Heart left ventricle (tissue), 16 donors: ENCODE measurements at regions of chr15 and their contacts with region 1.

Region 1: DNA sequence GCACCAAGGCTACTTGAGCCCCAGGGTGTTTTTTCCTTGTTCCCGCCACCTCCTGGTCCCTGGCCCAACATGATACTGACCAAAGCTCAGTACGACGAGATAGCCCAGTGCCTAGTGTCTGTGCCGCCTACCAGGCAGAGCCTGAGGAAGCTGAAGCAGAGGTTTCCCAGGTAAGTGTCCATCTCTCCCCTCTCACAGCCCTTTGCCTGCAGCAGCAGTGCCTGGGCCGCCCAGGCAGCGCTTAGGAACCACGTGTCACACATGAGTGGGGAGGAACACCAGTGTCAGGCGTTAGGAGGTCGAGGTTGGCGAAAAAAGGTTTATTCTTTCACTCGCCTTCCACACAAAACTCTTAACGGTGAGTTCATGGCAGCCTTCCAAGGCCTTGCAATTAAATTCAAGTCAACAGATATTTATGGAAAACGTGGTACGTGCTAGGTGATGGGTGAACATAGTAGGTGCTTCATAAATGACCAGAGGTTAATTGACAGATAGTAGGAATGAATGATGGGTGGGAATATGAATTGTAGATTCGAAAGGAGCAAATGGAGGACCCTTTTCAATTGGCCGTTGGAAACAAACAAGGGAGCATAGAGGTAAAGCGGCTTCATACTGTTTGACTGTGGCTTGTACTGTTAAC is 486 bp downstream of the CDIN1 start:
- DNase-seq: peak in 4 of 5 donors; percentile 31 to 66 (median 44)
- ATAC-seq: peak in 3 of 4 donors; percentile 23 to 54 (median 36)
- H3K4me3 ChIP-seq: peak overlapping the region; percentile 15 to 83 (median 74)
- H3K27ac ChIP-seq: peak overlapping the region; percentile 18 to 91 (median 88)
- H3K4me1 ChIP-seq: peaks cover 0 to 41% (median 12%) of the 10 kb centered on the region in 12 donors
- H3K27me3 ChIP-seq: no peaks in the 10 kb centered on the region
- CTCF ChIP-seq: peak in 1 of 12 donors; percentile 0
- POLR2A ChIP-seq: no peak

Region 2: DNA sequence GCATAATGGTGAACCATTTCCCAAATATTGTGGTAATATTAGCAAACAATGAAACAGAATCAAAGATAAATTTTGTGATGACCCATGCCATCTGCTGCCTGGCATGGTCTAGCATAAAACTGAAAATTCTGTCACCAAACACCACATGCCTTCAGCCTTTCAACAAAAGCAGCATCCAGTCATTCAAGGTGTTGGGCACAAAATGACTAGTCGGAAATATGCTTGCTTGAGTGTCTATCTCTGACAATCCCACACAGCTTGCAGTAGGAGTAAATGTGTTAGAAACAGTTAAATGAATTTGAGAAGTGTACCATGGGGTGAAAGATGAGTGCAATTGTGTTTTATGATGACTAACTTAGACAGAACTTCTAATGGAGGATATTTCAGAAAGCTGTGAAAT is 62.2 kb before region 1 on chr15:
- intact Hi-C with region 1: no loop called
- DNase-seq: no peak
- ATAC-seq: no peak
- H3K4me3 ChIP-seq: no peak overlapping the region
- H3K27ac ChIP-seq: no peak overlapping the region
- H3K4me1 ChIP-seq: no peaks in the 10 kb centered on the region
- H3K27me3 ChIP-seq: no peaks in the 10 kb centered on the region
- CTCF ChIP-seq: no peak
- POLR2A ChIP-seq: no peak

Region 3: DNA sequence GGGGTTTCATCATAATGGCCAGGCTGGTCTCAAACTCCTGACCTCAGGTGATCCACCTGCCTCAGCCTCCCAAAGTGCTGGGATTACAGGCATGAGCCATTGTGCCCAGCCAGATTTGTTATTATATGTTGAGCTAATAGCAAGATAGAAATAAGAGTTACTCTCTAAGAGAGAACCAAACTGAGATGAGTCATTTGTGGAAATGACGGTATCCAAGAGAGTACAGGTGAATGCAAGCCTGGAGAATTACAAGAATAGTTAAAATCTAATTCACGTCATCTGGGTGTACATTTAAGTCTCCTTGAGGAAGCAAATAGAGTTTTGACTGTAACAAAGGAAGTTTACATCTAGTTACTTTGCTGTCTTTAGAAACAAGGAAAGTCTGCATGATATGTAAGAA is 12.5 kb before region 1 on chr15:
- intact Hi-C with region 1: no loop called
- DNase-seq: no peak
- ATAC-seq: no peak
- H3K4me3 ChIP-seq: no peak overlapping the region
- H3K27ac ChIP-seq: no peak overlapping the region
- H3K4me1 ChIP-seq: no peaks in the 10 kb centered on the region
- H3K27me3 ChIP-seq: no peaks in the 10 kb centered on the region
- CTCF ChIP-seq: no peak
- POLR2A ChIP-seq: no peak

Region 4: GRCh38 chr15:36601497-36601932 is 21.6 kb after region 1 on chr15:
- intact Hi-C with region 1: loop called in 1 of 10 experiments (anchors 2 kb)
- DNase-seq: peak in 4 of 5 donors; percentile 73 to 80 (median 77)
- ATAC-seq: peak; percentile 86 to 92 (median 90)
- H3K4me3 ChIP-seq: peak overlapping the region in 2 of 12 donors; percentile 15 to 17
- H3K27ac ChIP-seq: peak overlapping the region; percentile 79 to 97 (median 92)
- H3K4me1 ChIP-seq: peaks cover 0 to 44% (median 16%) of the 10 kb centered on the region in 12 donors
- H3K27me3 ChIP-seq: no peaks in the 10 kb centered on the region
- CTCF ChIP-seq: no peak
- POLR2A ChIP-seq: no peak